MCF 10A (cell line): ENCODE measurements at regions of chr21 and their contacts with region 1.

Region 1: GRCh38 chr21:17387030-17387617 is 125.7 kb upstream of the CXADR start:
- DNase-seq: peak; percentile 77
- H3K4me3 Mint-ChIP-seq: no peak overlapping the region
- H3K27ac Mint-ChIP-seq: no peak overlapping the region
- H3K4me1 Mint-ChIP-seq: no peaks in the 10 kb centered on the region
- H3K27me3 Mint-ChIP-seq: no peaks in the 10 kb centered on the region
- CTCF ChIP-seq: peak; percentile 68

Region 2: GRCh38 chr21:17476006-17476405 is 88.9 kb after region 1 on chr21:
- CTCF ChIA-PET with region 1: no interaction called
- POLR2A ChIA-PET with region 1: no interaction called
- intact Hi-C with region 1: no loop called
- DNase-seq: no peak
- H3K4me3 Mint-ChIP-seq: no peak overlapping the region
- H3K27ac Mint-ChIP-seq: no peak overlapping the region
- H3K4me1 Mint-ChIP-seq: no peaks in the 10 kb centered on the region
- H3K27me3 Mint-ChIP-seq: no peaks in the 10 kb centered on the region
- CTCF ChIP-seq: no peak

Region 3: DNA sequence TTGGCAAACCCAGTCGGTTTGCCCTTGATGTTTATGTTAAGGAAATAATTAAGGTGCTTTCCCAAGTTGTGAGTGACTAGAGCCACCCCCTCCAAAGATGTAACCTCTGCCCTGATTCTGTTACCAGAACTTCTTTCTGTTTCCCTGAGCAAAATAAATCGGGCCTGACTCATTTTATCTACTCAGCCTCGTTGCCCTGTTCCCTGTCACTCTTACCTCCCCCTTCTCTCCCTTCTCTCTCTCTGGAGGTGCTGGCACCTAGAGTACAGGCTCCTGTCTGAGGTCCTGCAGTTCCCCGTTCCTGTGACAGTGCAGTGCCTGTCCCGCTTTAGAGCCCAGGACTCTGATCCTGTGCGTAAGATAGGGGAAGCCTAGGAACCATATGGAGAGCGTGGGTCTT is 161.1 kb after region 1 on chr21:
- CTCF ChIA-PET with region 1: interaction called, 14 read pairs
- POLR2A ChIA-PET with region 1: no interaction called
- intact Hi-C with region 1: no loop called
- DNase-seq: no peak
- H3K4me3 Mint-ChIP-seq: no peak overlapping the region
- H3K27ac Mint-ChIP-seq: no peak overlapping the region
- H3K4me1 Mint-ChIP-seq: peaks cover 13% of the 10 kb centered on the region
- H3K27me3 Mint-ChIP-seq: no peaks in the 10 kb centered on the region
- CTCF ChIP-seq: no peak

Region 4: GRCh38 chr21:17554679-17555465 is 167.7 kb after region 1 on chr21:
- CTCF ChIA-PET with region 1: interaction called, 86 read pairs
- POLR2A ChIA-PET with region 1: interaction called, 8 read pairs
- intact Hi-C with region 1: loop called (anchors 1 kb)
- DNase-seq: peak; percentile 35
- H3K4me3 Mint-ChIP-seq: no peak overlapping the region
- H3K27ac Mint-ChIP-seq: no peak overlapping the region
- H3K4me1 Mint-ChIP-seq: peaks cover 11% of the 10 kb centered on the region
- H3K27me3 Mint-ChIP-seq: no peaks in the 10 kb centered on the region
- CTCF ChIP-seq: peak; percentile 26

Region 5: DNA sequence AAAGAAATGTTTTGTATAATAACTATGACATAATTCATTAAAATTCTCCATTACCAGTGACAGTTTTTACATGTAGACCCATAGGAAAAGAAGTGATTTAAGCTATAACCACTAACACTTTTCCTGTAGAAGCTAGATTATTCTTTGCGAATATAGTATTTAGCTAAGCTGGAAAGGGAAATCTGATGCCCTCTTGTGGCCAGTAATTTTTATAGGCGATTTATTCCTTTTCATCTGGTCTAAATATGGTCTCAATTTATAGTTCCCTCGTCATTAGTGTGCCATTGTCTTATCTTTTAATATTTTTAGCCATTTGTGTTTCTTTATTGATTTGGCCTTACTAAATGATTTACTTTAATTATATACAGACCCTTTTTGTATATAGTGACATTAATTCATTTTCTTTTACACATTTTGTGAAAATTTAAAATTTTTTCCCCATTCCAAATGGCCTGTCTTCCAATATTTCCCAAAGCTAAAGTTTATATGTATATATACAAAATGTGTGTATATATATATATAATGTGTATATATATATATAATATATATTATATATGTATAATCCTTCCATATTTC is 198.8 kb after region 1 on chr21:
- CTCF ChIA-PET with region 1: interaction called, 146 read pairs
- POLR2A ChIA-PET with region 1: interaction called, 3 read pairs
- intact Hi-C with region 1: loop called (anchors 2 kb)
- DNase-seq: peak; percentile 62
- H3K4me3 Mint-ChIP-seq: no peak overlapping the region
- H3K27ac Mint-ChIP-seq: no peak overlapping the region
- H3K4me1 Mint-ChIP-seq: no peaks in the 10 kb centered on the region
- H3K27me3 Mint-ChIP-seq: no peaks in the 10 kb centered on the region
- CTCF ChIP-seq: peak; percentile 45